Endothelial cell of umbilical vein (primary cell): ENCODE measurements at regions of chr2 and their contacts with region 1.

Region 1: GRCh38 chr2:36695746-36696415 is 626 bp upstream of the VIT start:
- DNase-seq: peak; percentile 70
- H3K4me3 ChIP-seq: peak overlapping the region in 1 of 3 experiments; percentile 71
- H3K27ac ChIP-seq: peak overlapping the region; percentile 32
- H3K4me1 ChIP-seq: peaks cover 28% of the 10 kb centered on the region
- H3K27me3 ChIP-seq: no peaks in the 10 kb centered on the region
- CTCF ChIP-seq: peak; percentile 16 to 21
- POLR2A ChIP-seq: no peak

Region 2: DNA sequence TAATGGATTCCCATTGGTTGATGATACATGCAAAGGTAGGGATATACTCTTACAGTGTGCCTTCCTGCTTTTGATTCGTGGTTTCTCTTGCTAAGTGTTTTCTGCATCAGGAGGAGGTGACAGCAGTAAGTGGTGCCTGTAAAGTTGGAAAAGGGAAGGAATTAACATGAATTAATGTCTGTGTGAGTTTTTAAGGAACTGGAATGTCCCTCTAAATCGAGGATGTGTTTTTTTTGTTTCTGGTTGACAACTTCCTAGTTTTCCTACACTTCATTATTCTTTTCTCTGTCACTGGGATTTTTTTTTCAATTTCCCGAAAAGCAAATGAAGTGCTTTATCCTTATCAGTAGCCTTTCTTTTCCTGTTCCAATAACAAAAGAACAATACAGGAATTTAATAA is 285.9 kb before region 1 on chr2:
- CTCF ChIA-PET with region 1: no interaction called
- POLR2A ChIA-PET with region 1: no interaction called
- dilution Hi-C with region 1: no loop called
- intact Hi-C with region 1: no loop called
- DNase-seq: peak; percentile 82
- H3K4me3 ChIP-seq: peak overlapping the region in 1 of 3 experiments; percentile 53
- H3K27ac ChIP-seq: peak overlapping the region; percentile 92
- H3K4me1 ChIP-seq: peaks cover 100% of the 10 kb centered on the region
- H3K27me3 ChIP-seq: no peaks in the 10 kb centered on the region
- CTCF ChIP-seq: no peak
- POLR2A ChIP-seq: peak; percentile 56

Region 3: DNA sequence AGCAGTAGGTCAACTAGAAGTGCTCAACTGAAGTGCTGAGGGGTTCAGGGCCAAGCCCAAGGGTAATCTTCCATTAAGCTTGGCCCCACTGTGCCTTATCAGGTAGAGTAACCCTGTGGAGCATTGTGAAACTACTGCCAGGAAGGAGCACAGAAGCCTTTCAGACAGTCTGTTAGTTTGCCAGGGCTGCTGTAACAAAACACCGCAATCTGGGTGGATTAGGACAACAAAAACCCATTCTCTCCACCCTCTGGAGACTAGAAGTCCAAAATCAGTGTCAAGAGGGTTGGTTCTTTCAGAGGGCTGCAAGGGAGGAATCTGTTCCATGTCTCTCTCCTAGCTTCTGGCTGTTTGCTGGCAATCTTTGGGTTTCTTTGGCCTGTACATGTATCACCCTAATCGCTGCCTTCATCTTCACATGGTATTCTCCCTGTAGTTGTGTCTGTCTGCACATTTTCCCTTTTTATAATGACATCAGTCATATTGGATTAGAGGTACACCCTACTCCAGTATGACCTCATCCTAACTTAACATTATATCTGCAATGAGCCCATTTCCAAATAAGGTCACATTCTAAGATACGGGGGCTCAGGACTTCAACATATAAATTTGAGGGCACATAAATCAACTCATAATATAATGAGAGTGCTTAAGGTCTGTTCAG is 21.9 kb after region 1 on chr2:
- CTCF ChIA-PET with region 1: no interaction called
- POLR2A ChIA-PET with region 1: interaction called, 11 read pairs
- dilution Hi-C with region 1: no loop called
- intact Hi-C with region 1: no loop called
- DNase-seq: no peak
- H3K4me3 ChIP-seq: no peak overlapping the region
- H3K27ac ChIP-seq: no peak overlapping the region
- H3K4me1 ChIP-seq: no peaks in the 10 kb centered on the region
- H3K27me3 ChIP-seq: peaks cover 0 to 6% of the 10 kb centered on the region in 2 experiments
- CTCF ChIP-seq: no peak
- POLR2A ChIP-seq: no peak

Region 4: DNA sequence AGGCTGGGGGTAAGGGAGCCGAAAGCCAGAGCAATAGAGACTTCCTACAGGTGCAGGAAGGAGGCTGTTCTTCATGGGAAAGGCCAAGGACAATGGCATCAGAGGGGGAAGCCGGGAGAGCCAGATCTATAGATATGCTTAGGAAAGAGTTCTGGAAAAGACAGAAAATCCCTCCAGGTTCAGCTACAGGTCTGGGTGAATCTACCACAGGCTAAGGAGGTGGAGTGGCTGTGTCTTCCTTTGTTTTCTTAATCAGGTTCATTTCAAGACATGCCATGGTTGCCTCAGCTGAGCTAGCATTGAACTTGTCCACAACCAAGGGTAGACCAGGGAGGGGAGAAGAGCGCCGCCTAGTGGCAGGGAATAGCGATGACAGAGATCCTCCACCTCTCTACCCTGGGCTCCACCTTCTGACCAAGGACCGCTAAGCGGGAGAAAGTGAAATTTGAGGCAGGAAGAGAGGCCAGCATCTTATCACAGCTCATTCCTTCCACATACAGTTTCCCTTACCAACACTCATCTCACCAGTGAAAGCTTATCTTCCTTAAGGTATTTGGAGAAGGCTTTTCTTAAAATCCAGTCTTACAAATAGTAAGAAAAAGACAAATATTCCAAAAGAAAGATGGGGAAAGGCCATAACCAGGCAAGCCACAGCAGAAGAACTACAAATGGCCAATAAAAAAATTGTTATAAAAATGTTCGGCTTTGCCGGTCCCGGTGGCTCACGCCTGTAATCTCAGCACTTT is 74.8 kb after region 1 on chr2:
- CTCF ChIA-PET with region 1: interaction called, 12 read pairs
- POLR2A ChIA-PET with region 1: no interaction called
- dilution Hi-C with region 1: no loop called
- intact Hi-C with region 1: loop called (anchors 5 kb)
- DNase-seq: peak; percentile 49
- H3K4me3 ChIP-seq: no peak overlapping the region
- H3K27ac ChIP-seq: no peak overlapping the region
- H3K4me1 ChIP-seq: no peaks in the 10 kb centered on the region
- H3K27me3 ChIP-seq: peaks cover 1 to 6% of the 10 kb centered on the region in 2 experiments
- CTCF ChIP-seq: peak; percentile 79
- POLR2A ChIP-seq: no peak

Region 5: DNA sequence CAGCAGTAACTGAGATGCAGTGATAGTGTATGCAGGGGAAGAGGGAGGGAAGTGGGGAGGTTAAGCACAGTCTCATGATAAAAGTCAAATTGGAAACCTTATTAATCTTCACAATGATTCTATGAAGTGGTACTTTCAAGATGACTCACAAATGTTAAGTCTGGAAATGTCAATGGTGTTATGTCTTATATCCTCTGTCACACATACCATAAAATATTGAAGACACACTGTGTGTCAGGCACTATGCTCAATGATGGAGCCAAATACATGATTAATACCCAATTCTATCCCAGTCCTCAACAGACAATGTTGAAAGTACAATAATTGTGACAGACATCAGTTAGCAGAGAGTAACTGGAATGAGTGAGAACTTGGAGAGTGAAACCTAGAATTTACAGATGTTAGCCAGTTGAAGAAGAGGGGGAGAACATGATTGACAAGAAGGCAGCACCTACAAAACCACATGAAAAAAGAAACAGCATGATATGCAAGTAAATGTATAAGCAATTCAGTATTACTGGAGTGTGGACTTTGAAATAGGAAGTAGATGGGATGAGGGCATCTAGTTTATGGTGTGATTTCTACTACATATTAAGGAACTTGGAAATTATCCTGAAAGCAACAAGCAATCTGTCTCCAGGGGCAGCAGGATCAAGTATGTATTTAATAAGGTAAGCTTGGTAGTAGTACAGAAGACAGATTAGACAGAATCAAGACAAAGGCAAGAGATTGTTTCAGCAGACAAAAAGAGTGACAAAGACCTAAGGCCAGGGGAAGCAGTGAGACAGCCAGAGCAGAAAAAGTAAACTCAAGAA is 162.9 kb after region 1 on chr2:
- CTCF ChIA-PET with region 1: no interaction called
- POLR2A ChIA-PET with region 1: interaction called, 10 read pairs
- dilution Hi-C with region 1: no loop called
- intact Hi-C with region 1: no loop called
- DNase-seq: peak; percentile 6
- H3K4me3 ChIP-seq: no peak overlapping the region
- H3K27ac ChIP-seq: no peak overlapping the region
- H3K4me1 ChIP-seq: no peaks in the 10 kb centered on the region
- H3K27me3 ChIP-seq: no peaks in the 10 kb centered on the region
- CTCF ChIP-seq: no peak
- POLR2A ChIP-seq: no peak